ENCODE measurements at regions of chr10 and their contacts with region 1.

Region 1: GRCh38 chr10:43234471-43235041 is 32.3 kb downstream of the RASGEF1A start:
- DNase-seq: no peak
- H3K4me3 ChIP-seq: no peak overlapping the region
- H3K27ac ChIP-seq: no peak overlapping the region
- H3K4me1 ChIP-seq: peaks cover 0 to 8% (median under 1%) of the 10 kb centered on the region in 4 experiments; a peak in 3 of 7 replicates
- H3K27me3 ChIP-seq: peaks cover 7 to 21% (median 18%) of the 10 kb centered on the region in 4 experiments
- CTCF ChIP-seq: no peak
- EP300 ChIP-seq: no peak
- POLR2A ChIP-seq: no peak
- RAD21 ChIP-seq: no peak

Region 2: DNA sequence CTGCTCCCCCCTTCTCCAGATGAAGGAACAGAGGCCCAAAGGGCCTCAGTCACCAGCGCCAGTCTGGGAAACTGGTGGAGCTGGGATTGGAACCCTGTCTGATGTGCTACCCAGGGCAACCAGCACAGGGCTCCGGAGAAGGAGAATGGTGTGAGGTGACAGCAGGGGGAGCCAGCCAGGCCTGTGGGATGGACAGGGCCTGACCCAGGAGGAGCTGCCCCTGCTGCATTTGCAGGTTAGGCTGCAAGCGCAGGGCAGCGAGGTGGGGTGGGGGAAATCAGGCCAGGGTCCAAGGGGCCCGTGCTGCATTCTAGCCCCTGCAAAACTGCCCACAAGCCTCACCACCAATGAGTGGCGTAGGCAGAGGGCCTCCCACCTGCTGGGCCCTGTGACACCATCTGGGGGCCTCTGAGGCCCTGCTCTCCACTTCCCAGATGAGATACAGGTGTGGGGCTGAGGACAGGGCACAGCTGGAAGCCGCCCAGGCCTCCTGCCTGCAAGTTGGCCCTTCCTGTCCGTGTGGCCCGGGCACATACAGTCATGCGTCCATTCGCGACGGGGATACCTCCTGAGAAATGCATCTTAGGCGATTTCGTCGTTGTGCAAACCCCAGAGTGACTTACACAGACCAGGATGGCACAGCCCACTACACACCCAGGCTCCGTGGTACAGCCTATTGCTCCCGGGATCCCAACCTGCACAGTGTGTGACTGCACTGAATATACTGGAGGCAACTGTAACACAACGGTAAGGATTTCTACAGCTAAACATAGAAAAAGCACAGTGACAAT is 12.9 kb before region 1 on chr10:
- CTCF ChIA-PET with region 1: interaction called, 60 read pairs
- POLR2A ChIA-PET with region 1: interaction called, 6 read pairs
- DNase-seq: peak in 1 of 2 experiments; percentile 76
- H3K4me3 ChIP-seq: no peak overlapping the region
- H3K27ac ChIP-seq: no peak overlapping the region
- H3K4me1 ChIP-seq: peaks cover 0 to 6% (median 2%) of the 10 kb centered on the region in 4 experiments; a peak in 4 of 7 replicates
- H3K27me3 ChIP-seq: no peaks in the 10 kb centered on the region
- CTCF ChIP-seq: peak; percentile 73 to 78 (median 75)
- EP300 ChIP-seq: no peak
- POLR2A ChIP-seq: no peak
- RAD21 ChIP-seq: peak; percentile 48 to 62

Region 3: GRCh38 chr10:43249962-43250614 is 15.5 kb after region 1 on chr10:
- CTCF ChIA-PET with region 1: interaction called, 16 read pairs
- POLR2A ChIA-PET with region 1: no interaction called
- DNase-seq: peak in 1 of 2 experiments; percentile 54
- H3K4me3 ChIP-seq: no peak overlapping the region
- H3K27ac ChIP-seq: no peak overlapping the region
- H3K4me1 ChIP-seq: peaks cover 0 to 15% (median 5%) of the 10 kb centered on the region in 4 experiments; a peak in 5 of 7 replicates
- H3K27me3 ChIP-seq: no peaks in the 10 kb centered on the region
- CTCF ChIP-seq: no peak
- EP300 ChIP-seq: no peak
- POLR2A ChIP-seq: no peak
- RAD21 ChIP-seq: no peak

Measured in H1 (cell line).